H1 (cell line): ENCODE measurements at regions of chr4 and their contacts with region 1.

Region 1: DNA sequence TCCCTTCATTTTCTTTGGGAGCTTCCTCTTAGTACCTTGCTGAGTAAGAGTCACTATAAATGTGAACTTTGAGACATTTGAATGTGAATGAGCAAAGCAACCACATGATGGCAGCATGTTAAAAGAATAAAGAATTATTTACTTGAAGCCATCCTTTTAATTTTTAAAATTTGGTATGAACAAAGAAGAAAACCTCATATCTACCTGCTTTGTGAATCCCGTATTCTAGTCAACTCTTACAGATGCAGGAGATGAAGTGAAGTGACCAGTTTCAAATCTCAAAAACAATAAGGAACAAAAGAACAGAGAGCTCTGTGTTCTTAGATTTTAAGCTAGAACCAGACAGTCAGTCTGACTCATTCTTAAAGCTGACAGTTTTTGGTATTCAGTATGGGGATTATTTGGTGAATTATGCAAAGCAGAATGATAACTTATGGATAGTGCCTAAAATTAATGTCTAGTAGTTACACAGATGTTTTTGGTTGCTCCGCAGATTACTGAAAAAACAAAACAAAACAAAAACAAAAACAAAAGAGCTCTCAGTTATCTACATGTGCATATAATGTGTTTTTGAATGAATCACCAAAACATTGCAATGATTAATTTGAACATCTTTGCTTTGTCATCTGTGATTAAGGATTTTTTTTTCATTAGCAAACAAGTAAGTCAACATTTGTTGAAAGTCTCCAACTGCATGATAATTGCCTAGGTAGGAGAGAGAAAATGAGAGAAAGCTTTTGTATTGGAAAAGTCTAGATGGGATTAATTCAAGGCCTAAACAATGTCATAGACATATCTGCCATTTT is 48.2 kb upstream of the H2AZ1 start:
- DNase-seq: no peak
- H3K4me3 ChIP-seq: no peak overlapping the region
- H3K27ac ChIP-seq: no peak overlapping the region
- H3K4me1 ChIP-seq: no peaks in the 10 kb centered on the region
- H3K27me3 ChIP-seq: no peaks in the 10 kb centered on the region
- CTCF ChIP-seq: peak in 1 of 3 experiments; percentile 24; a peak in 2 of 4 replicates
- EP300 ChIP-seq: no peak
- POLR2A ChIP-seq: no peak
- RAD21 ChIP-seq: peak; percentile 56 to 60

Region 2: GRCh38 chr4:99987681-99988080 is 10.6 kb before region 1 on chr4:
- CTCF ChIA-PET with region 1: interaction called, 15 read pairs
- POLR2A ChIA-PET with region 1: no interaction called
- DNase-seq: no peak
- H3K4me3 ChIP-seq: no peak overlapping the region
- H3K27ac ChIP-seq: no peak overlapping the region
- H3K4me1 ChIP-seq: no peaks in the 10 kb centered on the region
- H3K27me3 ChIP-seq: no peaks in the 10 kb centered on the region
- CTCF ChIP-seq: no peak
- EP300 ChIP-seq: no peak
- POLR2A ChIP-seq: no peak
- RAD21 ChIP-seq: no peak

Region 3: GRCh38 chr4:100017637-100018310 is 19.5 kb after region 1 on chr4:
- CTCF ChIA-PET with region 1: interaction called, 11 read pairs
- POLR2A ChIA-PET with region 1: no interaction called
- DNase-seq: no peak
- H3K4me3 ChIP-seq: no peak overlapping the region
- H3K27ac ChIP-seq: no peak overlapping the region
- H3K4me1 ChIP-seq: peaks cover 0 to 3% (median 1%) of the 10 kb centered on the region in 4 experiments; a peak in 2 of 7 replicates
- H3K27me3 ChIP-seq: no peaks in the 10 kb centered on the region
- CTCF ChIP-seq: no peak
- EP300 ChIP-seq: no peak
- POLR2A ChIP-seq: no peak
- RAD21 ChIP-seq: no peak

Region 4: DNA sequence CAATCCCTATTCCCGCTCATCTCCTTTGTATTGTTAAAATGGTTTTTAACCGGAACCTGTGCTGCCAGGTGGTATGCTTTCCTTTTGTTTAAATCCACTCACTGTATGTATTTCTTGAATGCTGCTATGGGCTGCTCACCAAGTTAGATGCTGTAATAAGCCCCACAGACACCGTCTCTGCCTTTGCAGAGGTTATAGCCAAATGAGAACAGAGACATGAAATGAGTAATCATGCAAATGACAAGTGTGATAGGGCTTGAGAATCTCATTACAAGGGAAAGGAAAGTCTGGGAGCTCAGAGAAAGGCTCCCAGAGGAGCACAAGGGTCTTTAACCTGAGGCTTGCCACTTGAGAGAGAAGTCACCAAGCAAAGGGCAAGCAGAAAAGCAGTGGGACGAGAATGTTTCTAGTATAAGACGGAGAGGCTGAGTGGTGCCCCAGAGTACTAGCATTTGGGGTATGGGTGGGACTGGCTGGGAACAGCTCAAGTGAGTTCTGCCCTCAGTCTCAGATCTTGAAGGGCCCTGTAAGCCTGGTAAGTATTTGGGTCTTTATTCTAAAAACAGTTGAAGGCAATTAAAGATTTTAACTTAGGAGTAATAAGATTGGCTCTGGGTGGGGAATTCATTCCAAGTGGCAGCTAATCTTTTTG is 62.6 kb after region 1 on chr4:
- CTCF ChIA-PET with region 1: interaction called, 15 read pairs
- POLR2A ChIA-PET with region 1: no interaction called
- DNase-seq: no peak
- H3K4me3 ChIP-seq: no peak overlapping the region
- H3K27ac ChIP-seq: no peak overlapping the region
- H3K4me1 ChIP-seq: peaks cover 0 to 6% (median 0%) of the 10 kb centered on the region in 4 experiments; a peak in 1 of 7 replicates
- H3K27me3 ChIP-seq: no peaks in the 10 kb centered on the region
- CTCF ChIP-seq: no peak
- EP300 ChIP-seq: no peak
- POLR2A ChIP-seq: no peak
- RAD21 ChIP-seq: no peak